ENCODE measurements at regions of chr15 and their contacts with region 1.

Region 1: DNA sequence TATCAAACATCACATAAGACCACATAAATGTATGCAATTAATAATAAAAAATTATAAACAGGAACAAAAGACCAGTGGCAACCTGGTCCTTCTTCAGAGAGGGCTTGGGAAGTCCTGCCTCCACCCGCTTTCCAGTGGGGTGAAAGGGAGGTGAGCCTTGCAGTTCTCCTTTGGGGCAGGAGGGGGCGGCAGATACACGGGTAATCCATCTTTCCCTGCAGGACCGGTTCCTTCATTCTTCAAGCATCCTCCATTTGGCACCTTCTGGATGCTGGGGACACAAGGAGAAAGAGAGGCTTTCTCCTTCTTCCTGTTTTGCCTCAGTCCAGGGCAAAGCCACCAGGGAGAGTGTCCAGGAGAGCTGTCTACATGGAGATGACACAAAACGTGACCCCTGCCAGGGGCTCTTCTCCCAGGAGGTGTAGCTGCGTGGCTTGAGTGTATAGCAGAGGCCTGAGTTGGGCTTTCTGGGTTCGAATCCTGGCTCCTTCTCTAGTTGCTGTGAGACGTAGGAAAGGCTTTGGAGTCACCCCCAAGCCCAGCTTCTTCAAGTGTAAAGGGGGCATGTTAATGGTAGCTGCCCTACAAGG is 23.2 kb downstream of the RPLP1 start:
- DNase-seq: peak; percentile 82

Region 2: DNA sequence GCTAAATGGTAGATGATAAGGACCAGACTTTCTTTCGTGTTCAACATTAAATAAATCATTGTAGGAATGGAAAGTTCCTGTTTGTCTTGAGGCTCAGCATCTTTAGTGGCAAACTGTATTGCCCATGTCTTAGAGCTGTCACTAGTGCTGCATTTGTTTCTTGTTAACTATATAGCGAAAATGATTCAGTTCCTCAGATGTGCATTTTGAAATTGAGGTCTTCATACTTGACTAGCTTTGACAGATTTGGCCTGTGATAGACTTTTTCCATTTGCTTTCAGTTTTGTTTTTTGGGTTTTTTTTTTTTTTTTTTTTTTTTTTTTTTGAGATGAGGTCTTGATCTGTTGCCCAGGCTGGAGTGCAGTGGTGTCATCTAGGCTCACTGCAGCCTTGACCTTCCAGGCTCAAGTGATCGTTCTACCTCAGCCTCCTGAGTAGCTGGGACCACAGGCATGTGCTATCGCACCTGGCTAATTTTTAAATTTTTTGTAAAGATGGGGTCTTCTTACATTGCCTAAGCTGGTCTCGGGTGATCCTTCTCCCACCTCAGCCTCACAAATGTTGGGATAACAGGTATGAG is 32.7 kb before region 1 on chr15:
- CTCF ChIA-PET with region 1: no interaction called
- POLR2A ChIA-PET with region 1: no interaction called
- DNase-seq: no peak

Region 3: DNA sequence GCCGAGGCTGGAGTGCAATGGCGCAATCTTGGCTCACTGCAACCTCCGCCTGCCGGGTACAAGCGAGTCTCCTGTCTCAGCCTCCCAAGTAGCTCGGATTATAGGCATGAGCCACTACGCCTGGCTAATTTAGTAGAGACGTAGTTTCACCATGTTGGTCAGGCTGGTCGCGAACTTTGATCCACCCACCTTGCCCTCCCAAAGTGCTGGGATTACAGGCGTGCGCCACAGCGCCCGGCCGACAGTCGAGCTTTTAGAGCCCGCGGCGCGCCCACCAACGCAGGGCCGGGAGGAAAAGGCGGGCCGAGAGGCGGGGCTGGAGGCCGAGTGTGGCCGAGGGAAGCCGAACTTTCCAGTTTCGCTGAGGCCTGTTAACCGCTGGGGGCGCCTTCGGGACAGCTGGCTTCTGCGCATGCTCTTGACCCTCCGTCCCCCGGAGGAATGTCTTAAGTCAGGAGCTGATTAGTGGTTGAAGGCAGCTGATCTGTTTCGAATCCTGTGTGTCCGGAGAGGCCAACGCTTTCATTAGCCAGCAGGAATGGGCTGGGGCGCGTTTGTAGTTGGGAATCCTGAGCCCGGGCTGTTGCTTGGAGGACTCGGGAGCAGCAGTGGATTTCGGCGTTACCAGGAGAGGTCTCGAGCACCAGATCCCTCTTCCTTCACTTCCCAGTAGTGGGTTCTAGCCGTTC is 13.2 kb before region 1 on chr15:
- CTCF ChIA-PET with region 1: interaction called, 16 read pairs
- POLR2A ChIA-PET with region 1: interaction called, 9 read pairs
- DNase-seq: peak; percentile 95